GM13976 (cell line): ENCODE measurements at regions of chr17 and their contacts with region 1.

Region 1: GRCh38 chr17:61002316-61002736 is 324.7 kb downstream of the BCAS3 start:
- DNase-seq: no peak
- CTCF ChIP-seq: no peak

Region 2: DNA sequence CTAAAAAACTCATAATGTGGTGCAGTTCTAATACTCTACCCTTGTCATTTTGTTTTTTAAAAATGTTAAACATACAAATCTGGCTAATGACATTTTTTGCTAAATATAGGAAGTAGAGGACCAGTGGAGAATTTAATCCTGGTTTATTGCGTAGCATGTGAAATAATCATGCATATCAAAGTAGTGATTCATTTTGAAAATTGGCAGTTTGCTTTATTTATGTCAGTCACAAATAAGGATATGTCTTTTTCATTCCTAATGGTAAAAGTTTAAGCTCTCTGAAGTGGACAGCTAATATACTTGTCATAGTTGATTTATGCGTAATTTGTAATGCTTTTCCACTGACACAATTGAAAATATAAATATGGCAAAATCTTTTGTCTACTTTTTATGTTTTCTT is 100.5 kb before region 1 on chr17:
- in situ Hi-C with region 1: no loop called
- DNase-seq: no peak
- CTCF ChIP-seq: no peak

Region 3: DNA sequence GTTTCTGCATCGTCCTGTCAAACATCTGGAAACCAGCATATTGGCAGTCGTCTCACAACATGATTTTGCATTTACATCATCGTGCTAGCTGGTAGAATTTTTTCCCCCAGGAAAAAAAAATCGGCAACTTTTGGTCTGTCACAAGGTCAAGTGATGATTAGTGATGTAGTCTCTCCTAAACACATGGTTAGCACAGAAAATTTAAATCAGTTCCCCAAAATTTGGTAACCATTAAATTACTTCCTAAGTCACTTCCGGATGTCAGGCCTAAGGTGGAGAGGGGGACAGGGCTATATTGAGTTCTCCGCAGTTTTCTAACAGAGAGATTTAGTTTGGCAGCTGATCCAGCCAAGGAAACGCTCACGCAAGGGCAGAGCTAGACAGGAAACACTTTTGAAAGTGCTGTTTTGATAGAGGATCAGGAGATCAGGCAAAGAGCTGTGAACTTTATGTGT is 126.4 kb after region 1 on chr17:
- in situ Hi-C with region 1: no loop called
- DNase-seq: no peak
- CTCF ChIP-seq: no peak

Region 4: GRCh38 chr17:61361084-61361483 is 358.8 kb after region 1 on chr17:
- in situ Hi-C with region 1: loop called (anchors 25 kb)
- DNase-seq: no peak
- CTCF ChIP-seq: no peak